ENCODE measurements at regions of chr6 and their contacts with region 1.

Region 1: DNA sequence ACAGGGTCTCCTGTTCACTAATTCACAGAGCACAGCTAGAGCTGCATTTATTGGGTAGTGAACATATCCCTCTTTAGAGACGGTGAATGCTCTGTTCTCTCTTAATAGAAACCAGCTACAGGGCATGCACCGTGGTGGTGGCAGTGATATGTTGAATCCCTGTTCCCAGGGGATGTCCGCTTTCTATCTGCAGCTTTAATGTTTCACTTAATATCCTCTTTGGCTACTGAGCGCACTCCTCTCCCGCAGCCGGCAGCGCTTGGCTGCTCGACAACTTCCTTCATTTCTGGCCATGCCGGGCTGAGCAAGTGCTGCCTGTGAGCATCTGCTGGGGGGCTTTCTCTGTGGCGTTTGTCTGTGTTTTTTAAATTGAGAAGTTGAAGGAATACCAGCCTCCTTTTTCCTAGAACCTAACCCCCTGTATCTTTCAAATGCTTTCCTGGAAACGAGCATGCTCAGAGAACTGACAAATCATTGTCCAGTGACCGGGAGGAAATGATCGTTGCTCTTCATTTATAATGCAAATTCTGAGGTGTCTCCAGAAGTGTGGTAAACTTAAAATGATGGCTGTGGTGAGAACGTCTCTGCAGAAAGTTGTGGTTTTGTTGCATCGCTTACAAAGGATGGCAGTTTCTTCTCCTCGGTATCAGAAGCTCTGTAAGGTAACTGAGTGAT is 297.9 kb downstream of the UTRN start:
- DNase-seq: peak; percentile 58
- H3K4me3 Mint-ChIP-seq: peak overlapping the region; percentile 82
- H3K27ac Mint-ChIP-seq: peak overlapping the region; percentile 91
- H3K4me1 Mint-ChIP-seq: peaks cover 55% of the 10 kb centered on the region
- H3K27me3 Mint-ChIP-seq: no peaks in the 10 kb centered on the region

Region 2: GRCh38 chr6:144149891-144150709 is 433.0 kb before region 1 on chr6 and contains the start of gene STX11:
- intact Hi-C with region 1: loop called (anchors 1 kb)
- DNase-seq: peak; percentile 78
- H3K4me3 Mint-ChIP-seq: peak within 1 kb of the TSS; percentile 91
- H3K27ac Mint-ChIP-seq: peak within 1 kb of the TSS; percentile 98
- H3K4me1 Mint-ChIP-seq: peaks cover 63% of the 10 kb centered on the region
- H3K27me3 Mint-ChIP-seq: peaks cover 1% of the 10 kb centered on the region
- total RNA-seq, gene STX11: 24.2 and 24.7 TPM in 2 replicates

Region 3: DNA sequence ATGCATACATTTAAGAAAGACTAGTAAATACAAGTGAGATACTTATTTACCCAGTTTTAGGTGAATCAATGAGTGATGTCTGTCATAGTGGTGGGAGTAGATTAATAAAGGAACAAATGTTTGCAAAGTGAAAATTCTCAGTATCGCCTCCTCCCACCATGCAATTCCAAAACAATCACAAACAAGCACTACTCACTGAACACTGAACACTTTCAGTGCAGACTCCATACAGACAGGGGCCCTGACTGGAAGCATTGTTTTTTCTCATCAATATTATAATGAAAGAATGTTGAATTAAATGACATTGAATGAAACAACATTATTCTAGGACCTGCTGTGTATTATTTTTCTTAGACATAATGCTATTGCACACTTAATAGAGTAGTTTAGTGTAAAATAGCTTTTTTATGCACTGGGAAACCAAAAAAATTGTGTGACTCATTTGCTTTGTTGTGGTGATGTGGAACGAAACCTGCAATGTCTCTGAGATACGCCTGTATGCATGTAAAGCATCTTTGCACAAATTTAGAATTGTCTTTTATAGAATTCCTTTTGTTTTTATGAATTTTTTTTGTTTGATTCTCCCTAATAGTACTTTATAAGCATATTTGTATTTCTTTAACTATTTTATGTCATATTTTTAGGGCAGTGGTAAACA is 19.6 kb after region 1 on chr6:
- intact Hi-C with region 1: loop called (anchors 1 kb)
- DNase-seq: peak; percentile 12
- H3K4me3 Mint-ChIP-seq: no peak overlapping the region
- H3K27ac Mint-ChIP-seq: peak overlapping the region; percentile 50
- H3K4me1 Mint-ChIP-seq: peaks cover 66% of the 10 kb centered on the region
- H3K27me3 Mint-ChIP-seq: no peaks in the 10 kb centered on the region

Region 4: DNA sequence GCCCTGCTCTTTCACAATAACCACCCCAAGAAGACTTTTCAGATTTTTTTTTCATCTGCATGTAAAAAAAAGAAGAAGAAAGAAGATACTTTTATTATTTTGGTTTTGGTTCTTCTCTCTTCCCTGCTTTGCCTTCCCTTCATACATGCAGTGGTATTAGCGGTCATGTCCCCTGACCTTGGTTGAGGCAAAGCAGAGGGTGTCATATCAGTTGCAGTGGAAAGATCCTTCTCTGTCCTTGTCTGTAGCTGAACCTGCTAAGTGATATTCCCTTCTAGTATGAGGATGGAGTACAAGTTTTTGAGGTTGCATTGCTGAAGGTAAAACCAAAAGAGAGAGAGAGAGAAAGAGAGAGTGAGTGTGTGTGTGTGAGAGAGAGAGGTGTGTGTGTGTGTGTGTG is 47.8 kb after region 1 on chr6:
- intact Hi-C with region 1: no loop called
- DNase-seq: no peak
- H3K4me3 Mint-ChIP-seq: no peak overlapping the region
- H3K27ac Mint-ChIP-seq: no peak overlapping the region
- H3K4me1 Mint-ChIP-seq: no peaks in the 10 kb centered on the region
- H3K27me3 Mint-ChIP-seq: no peaks in the 10 kb centered on the region

Region 5: GRCh38 chr6:144675231-144675861 is 92.3 kb after region 1 on chr6:
- intact Hi-C with region 1: loop called (anchors 2 kb)
- DNase-seq: peak; percentile 34
- H3K4me3 Mint-ChIP-seq: peak overlapping the region; percentile 41
- H3K27ac Mint-ChIP-seq: peak overlapping the region; percentile 18
- H3K4me1 Mint-ChIP-seq: peaks cover 51% of the 10 kb centered on the region
- H3K27me3 Mint-ChIP-seq: no peaks in the 10 kb centered on the region

Region 6: GRCh38 chr6:144696610-144697368 is 113.7 kb after region 1 on chr6:
- intact Hi-C with region 1: no loop called
- DNase-seq: no peak
- H3K4me3 Mint-ChIP-seq: no peak overlapping the region
- H3K27ac Mint-ChIP-seq: no peak overlapping the region
- H3K4me1 Mint-ChIP-seq: peaks cover 9% of the 10 kb centered on the region
- H3K27me3 Mint-ChIP-seq: no peaks in the 10 kb centered on the region

Region 7: DNA sequence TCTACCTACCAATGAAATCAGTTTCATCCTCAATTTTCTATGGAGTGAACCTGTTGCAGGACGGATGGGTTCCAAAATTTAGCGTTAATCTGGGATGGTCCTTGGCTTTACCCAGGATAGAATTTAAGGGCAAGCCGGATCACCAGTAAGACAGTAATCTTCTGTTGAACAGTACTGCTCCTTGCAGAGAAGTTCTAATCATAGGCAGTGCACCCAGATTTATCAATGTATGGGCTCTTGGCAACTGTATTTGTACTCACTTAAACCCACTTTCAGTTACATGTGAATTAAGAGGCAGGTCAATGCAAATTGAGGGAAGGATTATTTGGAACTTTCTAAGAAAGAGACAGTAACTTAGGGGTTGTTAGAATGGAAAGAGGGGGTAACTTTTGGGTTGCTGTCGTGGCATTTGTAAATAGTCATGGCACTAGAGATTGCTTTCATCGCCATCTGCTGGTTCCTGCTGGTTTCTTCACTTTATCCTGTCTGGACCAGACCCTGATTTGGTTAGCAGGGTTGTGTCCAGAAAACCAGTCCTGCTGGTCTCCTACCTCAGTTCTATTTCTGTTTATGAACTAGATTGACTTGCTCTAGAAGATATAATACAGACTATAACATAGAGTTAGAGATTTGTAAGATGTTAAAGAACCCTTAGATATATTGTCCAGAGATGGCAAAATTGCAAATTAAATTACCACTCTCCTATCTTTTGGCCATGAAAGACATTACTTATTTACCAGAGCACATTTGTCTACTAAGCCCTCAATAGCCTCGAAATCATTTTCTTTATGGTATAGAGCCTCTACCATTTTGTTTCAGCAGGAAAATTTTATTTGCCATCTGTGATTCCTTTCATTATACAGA is 348.3 kb after region 1 on chr6:
- intact Hi-C with region 1: loop called (anchors 1 kb)
- DNase-seq: no peak
- H3K4me3 Mint-ChIP-seq: no peak overlapping the region
- H3K27ac Mint-ChIP-seq: no peak overlapping the region
- H3K4me1 Mint-ChIP-seq: no peaks in the 10 kb centered on the region
- H3K27me3 Mint-ChIP-seq: peaks cover 16% of the 10 kb centered on the region

Region 8: GRCh38 chr6:145051661-145052060 is 468.6 kb after region 1 on chr6:
- intact Hi-C with region 1: no loop called
- DNase-seq: no peak
- H3K4me3 Mint-ChIP-seq: no peak overlapping the region
- H3K27ac Mint-ChIP-seq: no peak overlapping the region
- H3K4me1 Mint-ChIP-seq: no peaks in the 10 kb centered on the region
- H3K27me3 Mint-ChIP-seq: peaks cover 5% of the 10 kb centered on the region

Region 9: GRCh38 chr6:145214570-145214969 is 631.5 kb after region 1 on chr6:
- intact Hi-C with region 1: loop called (anchors 1 kb)
- DNase-seq: no peak
- H3K4me3 Mint-ChIP-seq: no peak overlapping the region
- H3K27ac Mint-ChIP-seq: no peak overlapping the region
- H3K4me1 Mint-ChIP-seq: peaks cover 12% of the 10 kb centered on the region
- H3K27me3 Mint-ChIP-seq: peaks cover 4% of the 10 kb centered on the region

Region 10: DNA sequence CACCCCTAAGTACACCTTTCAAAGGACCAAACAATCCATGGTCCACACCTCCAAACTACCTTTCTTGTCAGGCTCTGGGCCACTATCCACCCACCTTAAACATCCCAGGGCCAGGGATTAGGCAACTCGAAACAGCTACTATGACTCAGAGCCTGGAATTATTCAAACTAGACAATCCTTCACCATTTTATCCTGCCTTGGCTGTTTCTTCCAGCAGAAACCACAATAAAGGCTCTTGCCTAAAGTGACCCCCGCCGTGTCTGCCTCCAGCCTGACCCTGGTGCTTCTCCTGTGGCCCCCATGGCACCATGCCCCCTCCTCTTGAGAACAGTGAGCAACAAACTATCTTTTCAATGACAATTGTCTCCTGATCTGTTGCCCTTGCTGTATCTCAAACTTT is 956.8 kb after region 1 on chr6:
- intact Hi-C with region 1: no loop called
- DNase-seq: no peak
- H3K4me3 Mint-ChIP-seq: no peak overlapping the region
- H3K27ac Mint-ChIP-seq: no peak overlapping the region
- H3K4me1 Mint-ChIP-seq: no peaks in the 10 kb centered on the region
- H3K27me3 Mint-ChIP-seq: no peaks in the 10 kb centered on the region

Region 11: DNA sequence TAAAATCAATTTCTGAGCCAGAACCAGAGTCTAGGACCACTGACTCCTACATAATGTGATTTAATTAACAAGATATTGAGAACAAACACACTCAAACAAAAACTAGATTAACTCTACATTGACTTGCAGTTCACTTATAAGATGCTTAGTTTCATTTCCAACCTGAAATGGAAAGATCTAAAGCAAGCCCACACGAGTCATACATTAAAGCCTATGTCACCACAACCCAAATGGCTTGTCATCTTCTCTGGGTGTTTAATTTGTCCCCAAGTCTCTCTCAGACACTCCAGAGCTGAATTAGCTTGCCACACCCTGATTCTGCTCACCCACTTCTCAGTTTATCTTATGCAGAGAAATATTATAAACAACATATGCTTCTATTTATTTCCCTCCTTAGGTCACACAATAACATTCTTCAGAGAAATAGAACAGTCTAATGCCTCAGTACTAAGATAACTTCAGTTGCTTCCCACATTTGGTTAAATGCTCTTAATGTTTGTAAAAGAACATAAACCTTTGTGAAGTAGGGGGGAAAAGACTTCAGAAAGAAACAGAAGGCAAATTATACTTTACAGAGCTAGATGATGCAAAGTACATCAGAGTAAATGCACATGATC is 1240.4 kb after region 1 on chr6:
- intact Hi-C with region 1: loop called (anchors 10 kb)
- DNase-seq: no peak
- H3K4me3 Mint-ChIP-seq: no peak overlapping the region
- H3K27ac Mint-ChIP-seq: peak overlapping the region; percentile 59
- H3K4me1 Mint-ChIP-seq: peaks cover 46% of the 10 kb centered on the region
- H3K27me3 Mint-ChIP-seq: no peaks in the 10 kb centered on the region